K562 (cell line): ENCODE measurements at regions of chr2 and their contacts with region 1.

Region 1: GRCh38 chr2:135985018-135985825 is at the start of gene DARS1:
- DNase-seq: peak; percentile 93 to 97 (median 96)
- ATAC-seq: peak; percentile 95
- H3K4me3 ChIP-seq: peak within 1 kb of the TSS; percentile 94
- H3K27ac ChIP-seq: peak within 1 kb of the TSS; percentile 99
- H3K4me1 ChIP-seq: peaks cover 9 to 10% of the 10 kb centered on the region in 2 experiments; a peak in 3 of 5 replicates
- H3K27me3 ChIP-seq: no peaks in the 10 kb centered on the region
- CTCF ChIP-seq: peak in 1 of 3 experiments; percentile 25; a peak in 1 of 6 replicates
- EP300 ChIP-seq: 0 out of 2 replicates have a peak, but pooled peaks have one; percentile 3
- POLR2A ChIP-seq: peak; percentile 95
- RAD21 ChIP-seq: no peak
- polyA plus RNA-seq, gene DARS1: 91.5 to 95.0 TPM

Region 2: GRCh38 chr2:135876066-135876711 is 109.0 kb before region 1 on chr2 and contains the start of gene MCM6:
- CTCF ChIA-PET with region 1: no interaction called
- POLR2A ChIA-PET with region 1: interaction called, 5 read pairs
- in situ Hi-C with region 1: no loop called
- intact Hi-C with region 1: loop called (anchors 5 kb)
- DNase-seq: peak; percentile 97 to 100 (median 98)
- ATAC-seq: peak; percentile 97
- H3K4me3 ChIP-seq: peak within 1 kb of the TSS; percentile 82
- H3K27ac ChIP-seq: peak within 1 kb of the TSS; percentile 91
- H3K4me1 ChIP-seq: peaks cover 12 to 14% of the 10 kb centered on the region in 2 experiments; a peak in 4 of 5 replicates
- H3K27me3 ChIP-seq: no peaks in the 10 kb centered on the region
- CTCF ChIP-seq: no peak
- EP300 ChIP-seq: no peak
- POLR2A ChIP-seq: peak; percentile 87
- RAD21 ChIP-seq: no peak
- polyA plus RNA-seq, gene MCM6: 42.6 to 53.5 TPM

Region 3: GRCh38 chr2:135969655-135970387 is 15.4 kb before region 1 on chr2:
- CTCF ChIA-PET with region 1: no interaction called
- POLR2A ChIA-PET with region 1: no interaction called
- in situ Hi-C with region 1: no loop called
- intact Hi-C with region 1: no loop called
- DNase-seq: no peak
- ATAC-seq: no peak
- H3K4me3 ChIP-seq: no peak overlapping the region
- H3K27ac ChIP-seq: no peak overlapping the region
- H3K4me1 ChIP-seq: no peaks in the 10 kb centered on the region
- H3K27me3 ChIP-seq: no peaks in the 10 kb centered on the region
- CTCF ChIP-seq: no peak
- EP300 ChIP-seq: no peak
- POLR2A ChIP-seq: no peak
- RAD21 ChIP-seq: no peak